Gastrocnemius medialis (tissue), 4 donors: ENCODE measurements at regions of chr12 and their contacts with region 1.

Region 1: GRCh38 chr12:6278439-6279255 is 31.8 kb upstream of the PLEKHG6 start:
- DNase-seq: peak; percentile 66 to 82
- ATAC-seq: peak; percentile 81 to 89
- H3K4me3 ChIP-seq: peak overlapping the region; percentile 53 to 74 (median 54)
- H3K27ac ChIP-seq: peak overlapping the region; percentile 79 to 98 (median 90)
- H3K4me1 ChIP-seq: peaks cover 19 to 30% of the 10 kb centered on the region in 2 donors
- H3K27me3 ChIP-seq: no peaks in the 10 kb centered on the region
- CTCF ChIP-seq: peak in 4 of 5 experiments; percentile 73 to 100 (median 100)
- POLR2A ChIP-seq: peak; percentile 64 to 67

Region 2: GRCh38 chr12:5988659-5989116 is 290.0 kb before region 1 on chr12:
- in situ Hi-C with region 1: loop called in 3 of 4 experiments (anchors 5 to 25 kb)
- intact Hi-C with region 1: no loop called
- DNase-seq: peak; percentile 22 to 48
- ATAC-seq: peak; percentile 74 to 85
- H3K4me3 ChIP-seq: no peak overlapping the region
- H3K27ac ChIP-seq: no peak overlapping the region
- H3K4me1 ChIP-seq: peaks cover 0 to 3% of the 10 kb centered on the region in 2 donors
- H3K27me3 ChIP-seq: no peaks in the 10 kb centered on the region
- CTCF ChIP-seq: peak; percentile 82 to 94 (median 86)
- POLR2A ChIP-seq: no peak

Region 3: GRCh38 chr12:6062757-6063735 is 215.6 kb before region 1 on chr12:
- in situ Hi-C with region 1: loop called in 2 of 4 experiments (anchors 5 to 10 kb)
- intact Hi-C with region 1: no loop called
- DNase-seq: peak in 1 of 2 donors; percentile 15
- ATAC-seq: peak; percentile 45 to 54
- H3K4me3 ChIP-seq: no peak overlapping the region
- H3K27ac ChIP-seq: no peak overlapping the region
- H3K4me1 ChIP-seq: no peaks in the 10 kb centered on the region
- H3K27me3 ChIP-seq: no peaks in the 10 kb centered on the region
- CTCF ChIP-seq: peak; percentile 67 to 77 (median 75)
- POLR2A ChIP-seq: no peak

Region 4: DNA sequence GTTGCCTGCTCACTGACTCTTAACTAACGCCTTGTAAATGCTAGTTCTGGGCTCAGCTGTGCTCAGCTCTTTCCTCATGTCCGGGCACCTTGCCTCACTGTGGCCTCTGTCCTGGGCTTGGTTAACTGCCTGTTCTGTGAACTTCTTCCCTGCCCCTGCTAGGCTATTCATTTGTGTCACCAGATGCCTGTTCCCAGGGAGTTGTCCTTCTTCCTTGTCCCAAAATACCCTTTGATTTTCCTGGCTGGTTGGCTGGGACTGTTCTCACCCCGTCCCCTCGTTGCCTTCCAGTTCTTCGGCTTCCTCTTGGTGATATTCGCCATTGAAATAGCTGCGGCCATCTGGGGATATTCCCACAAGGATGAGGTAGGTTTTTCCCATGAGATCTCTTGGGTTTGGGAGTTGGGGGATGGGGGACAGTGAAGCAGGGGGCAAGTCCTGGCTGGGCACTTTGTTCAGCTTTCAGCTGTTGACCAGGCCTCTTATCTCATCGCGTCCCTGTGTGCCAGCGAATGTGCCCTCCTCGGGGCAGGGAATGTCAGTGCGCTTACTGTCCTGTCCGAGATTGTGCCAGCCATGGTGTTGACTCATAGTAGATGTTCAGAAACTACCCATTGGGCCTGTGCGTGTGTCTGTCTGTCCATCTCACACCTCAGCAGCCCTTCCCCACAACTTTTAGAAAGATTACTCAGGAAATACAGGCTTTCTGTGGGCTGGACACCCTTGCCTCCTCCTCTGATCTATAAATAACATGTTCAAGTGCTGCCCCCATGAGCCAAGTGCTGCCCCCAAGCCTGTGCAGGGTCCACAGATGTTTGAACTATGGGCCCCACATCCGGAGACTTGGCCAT is 45.3 kb before region 1 on chr12:
- in situ Hi-C with region 1: no loop called
- intact Hi-C with region 1: loop called (anchors 1 kb)
- DNase-seq: peak; percentile 82 to 93
- ATAC-seq: peak; percentile 71 to 73
- H3K4me3 ChIP-seq: peak overlapping the region in 3 of 4 donors; percentile 4 to 36 (median 26)
- H3K27ac ChIP-seq: peak overlapping the region; percentile 82 to 89 (median 86)
- H3K4me1 ChIP-seq: peaks cover 59 to 77% of the 10 kb centered on the region in 2 donors
- H3K27me3 ChIP-seq: no peaks in the 10 kb centered on the region
- CTCF ChIP-seq: no peak
- POLR2A ChIP-seq: peak; percentile 35 to 53

Region 5: DNA sequence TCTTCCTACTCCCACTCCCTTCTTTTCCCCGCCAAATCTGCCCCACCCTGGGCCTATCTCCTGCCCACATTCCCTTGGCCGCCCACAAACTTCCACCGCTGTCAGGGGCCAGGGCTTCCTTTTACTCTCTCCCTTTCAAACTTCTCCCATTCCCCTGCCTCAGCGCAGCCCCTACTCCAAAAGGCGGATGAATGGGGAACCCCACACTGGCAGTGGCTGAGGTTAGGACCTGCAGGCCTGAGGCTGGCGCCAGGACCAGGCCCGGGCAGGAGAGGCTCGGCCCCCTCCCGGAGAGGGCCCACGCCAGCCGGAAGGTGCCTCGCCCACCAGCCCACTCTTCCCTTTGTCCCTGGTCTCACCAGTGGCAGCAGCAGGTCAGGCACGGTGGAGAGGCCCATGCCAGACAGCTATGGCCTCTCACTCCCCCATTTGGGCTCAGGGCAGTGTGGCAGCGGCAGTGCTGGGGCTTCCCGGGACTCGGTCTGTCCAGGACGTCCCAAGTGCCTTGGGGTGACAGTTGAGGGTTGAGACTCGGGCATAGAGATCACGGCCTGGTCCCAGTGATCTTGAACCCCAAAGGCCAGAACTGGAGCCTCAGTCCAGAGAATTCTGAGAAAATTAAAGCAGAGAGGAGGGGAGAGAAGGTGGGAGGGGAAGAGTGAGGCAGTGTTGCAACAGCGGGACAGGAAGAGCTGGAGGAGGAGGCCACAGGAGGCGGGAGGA is 62.9 kb after region 1 on chr12 and contains the start of gene TNFRSF1A:
- in situ Hi-C with region 1: no loop called
- intact Hi-C with region 1: loop called (anchors 5 kb)
- DNase-seq: peak; percentile 80 to 84
- ATAC-seq: peak; percentile 87 to 88
- H3K4me3 ChIP-seq: peak within 1 kb of the TSS; percentile 58 to 99 (median 81)
- H3K27ac ChIP-seq: peak within 1 kb of the TSS; percentile 92 to 99 (median 96)
- H3K4me1 ChIP-seq: peaks cover 55 to 59% of the 10 kb centered on the region in 2 donors
- H3K27me3 ChIP-seq: no peaks in the 10 kb centered on the region
- CTCF ChIP-seq: no peak
- POLR2A ChIP-seq: peak; percentile 63 to 71
- total RNA-seq, gene TNFRSF1A: 103 to 220 (median 193) TPM